Lower leg skin (tissue), 4 donors: ENCODE measurements at regions of chrX and their contacts with region 1.

Region 1: DNA sequence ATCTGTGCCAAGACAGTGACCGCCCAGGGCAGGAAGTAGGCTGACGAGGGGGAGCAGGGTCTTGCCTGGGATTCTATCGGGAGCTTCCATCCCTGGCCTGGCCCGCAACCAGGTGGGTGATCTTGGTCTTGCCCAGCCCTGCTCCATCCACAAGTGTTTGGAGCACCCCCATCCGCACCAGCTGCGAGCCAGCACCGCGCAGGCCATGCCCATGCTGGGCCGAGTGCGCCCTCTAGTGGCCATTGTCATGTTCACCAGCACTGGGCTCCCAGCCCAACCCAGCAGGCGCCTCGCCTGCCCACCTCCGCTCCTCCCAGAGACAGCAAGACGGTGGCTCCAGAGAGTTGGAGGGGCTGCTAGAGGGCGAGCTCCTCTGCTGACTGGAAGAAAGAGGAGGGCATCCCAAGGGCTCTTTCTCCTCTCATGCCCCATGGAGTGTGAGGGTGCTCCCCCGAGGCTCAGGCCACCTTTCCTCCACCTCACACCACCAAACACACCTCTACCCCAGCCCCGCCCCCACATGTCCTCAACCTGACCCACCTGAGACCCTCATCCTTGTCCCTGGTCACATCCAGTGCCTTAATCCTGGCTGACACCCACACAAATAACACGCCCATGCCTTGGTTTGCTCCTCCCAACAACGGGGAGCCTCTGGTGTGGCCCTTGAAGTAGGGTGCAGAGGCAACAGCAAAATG is 9.8 kb upstream of the ATP2B3 start:
- DNase-seq: peak; percentile 44 to 96
- H3K4me3 ChIP-seq: no peak overlapping the region
- CTCF ChIP-seq: peak in 1 of 3 donors; percentile 43
- POLR2A ChIP-seq: no peak

Region 2: DNA sequence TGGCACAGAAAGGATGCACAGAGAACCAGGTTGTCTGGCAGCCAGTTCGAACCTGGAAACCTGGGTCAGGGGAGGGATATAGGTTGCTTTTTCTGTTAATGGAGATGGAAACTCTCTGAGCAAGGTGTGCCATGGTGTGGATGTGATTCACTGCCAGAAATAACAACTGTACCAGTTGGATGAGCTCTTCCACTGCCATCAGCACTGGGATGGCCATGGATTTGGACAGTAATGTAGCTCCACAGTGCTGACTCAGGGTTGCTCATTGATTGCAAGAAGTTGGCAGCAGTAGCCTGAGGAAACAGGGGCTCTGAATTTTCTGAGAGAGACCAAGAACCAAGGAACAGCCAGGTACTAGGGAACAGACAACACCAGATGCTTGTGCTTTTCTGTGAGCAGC is 547.5 kb before region 1 on chrX:
- intact Hi-C with region 1: loop called (anchors 10 kb)
- DNase-seq: no peak
- H3K4me3 ChIP-seq: no peak overlapping the region
- CTCF ChIP-seq: no peak
- POLR2A ChIP-seq: no peak